Right lobe of liver (tissue), 6 donors: ENCODE measurements at regions of chr3 and their contacts with region 1.

Region 1: DNA sequence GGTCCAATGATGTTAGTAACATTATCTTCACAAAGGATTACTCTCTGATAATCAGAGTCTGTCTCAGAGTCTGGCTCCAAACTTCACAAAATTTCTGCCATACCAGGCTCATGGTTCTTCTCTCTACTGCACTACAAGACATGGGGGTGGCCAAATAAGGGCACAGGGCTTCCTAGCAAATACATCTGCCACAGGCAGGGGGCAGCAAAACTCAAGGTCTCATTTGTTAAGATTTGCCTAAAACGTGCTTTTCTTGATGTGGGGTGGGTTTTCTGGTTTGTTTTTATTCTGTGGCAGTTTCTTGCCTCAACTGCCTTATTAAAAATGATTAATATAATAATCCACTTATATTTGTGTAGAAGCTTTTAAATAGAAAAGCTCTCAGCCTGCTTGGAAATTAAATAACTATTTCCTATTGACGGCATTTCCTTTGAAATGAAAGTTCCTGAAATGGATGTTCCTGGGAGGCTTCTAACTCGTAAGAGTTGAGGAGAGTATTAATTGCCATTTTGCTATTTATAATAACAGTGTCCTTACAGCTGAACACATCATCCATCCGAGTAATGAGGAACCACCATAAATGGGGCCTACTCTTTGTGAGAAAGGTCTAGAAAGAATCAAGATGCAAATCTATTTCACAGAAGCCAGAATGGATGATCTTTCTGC is 53.8 kb downstream of the SST start:
- DNase-seq: peak in 2 of 3 donors; percentile 34 to 65
- ATAC-seq: peak; percentile 87 to 90 (median 90)
- H3K4me3 ChIP-seq: no peak overlapping the region
- H3K27ac ChIP-seq: no peak overlapping the region
- H3K4me1 ChIP-seq: no peaks in the 10 kb centered on the region
- H3K27me3 ChIP-seq: no peaks in the 10 kb centered on the region
- CTCF ChIP-seq: peak; percentile 67 to 86 (median 78)
- POLR2A ChIP-seq: no peak

Region 2: DNA sequence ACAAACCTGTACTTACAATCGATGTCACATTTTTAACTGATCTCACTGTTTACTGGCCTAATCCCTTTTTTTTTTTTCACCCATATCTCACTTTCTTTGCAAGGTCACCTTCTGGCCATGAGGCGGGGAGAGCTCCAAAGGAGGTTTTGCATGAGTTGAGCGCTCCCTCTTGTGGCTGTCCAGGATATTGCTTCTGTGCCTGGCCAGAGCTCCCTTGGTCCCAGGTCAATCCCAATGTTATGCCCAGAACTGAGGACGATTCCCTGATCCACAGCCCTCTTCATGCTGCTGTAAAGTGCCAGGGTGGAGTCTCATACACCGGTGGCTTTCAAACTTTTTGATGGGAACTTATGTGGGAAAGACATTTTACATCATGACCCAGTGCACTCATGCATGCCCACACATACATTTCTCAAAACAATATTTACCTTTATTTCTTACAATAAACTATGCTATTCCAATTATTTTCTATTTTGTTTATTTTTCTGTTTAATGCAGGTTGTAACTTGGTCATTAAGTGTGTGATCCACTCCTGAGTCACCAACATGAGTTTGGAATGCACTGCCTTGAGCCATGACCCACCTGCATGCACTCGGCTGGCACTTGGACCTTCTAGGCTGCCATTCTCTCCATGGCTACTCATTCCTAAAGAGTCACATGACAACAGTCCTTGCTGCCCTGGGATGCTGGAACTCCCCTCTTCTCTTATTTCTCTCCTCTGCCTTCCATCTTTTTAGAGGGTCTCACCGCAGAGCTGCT is 63.4 kb after region 1 on chr3:
- intact Hi-C with region 1: loop called (anchors 5 to 10 kb)
- DNase-seq: peak; percentile 74 to 84 (median 76)
- ATAC-seq: peak; percentile 98 to 99 (median 99)
- H3K4me3 ChIP-seq: no peak overlapping the region
- H3K27ac ChIP-seq: no peak overlapping the region
- H3K4me1 ChIP-seq: peaks cover 0 to 6% (median 0%) of the 10 kb centered on the region in 4 donors
- H3K27me3 ChIP-seq: no peaks in the 10 kb centered on the region
- CTCF ChIP-seq: peak; percentile 88 to 95 (median 92)
- POLR2A ChIP-seq: no peak

Region 3: DNA sequence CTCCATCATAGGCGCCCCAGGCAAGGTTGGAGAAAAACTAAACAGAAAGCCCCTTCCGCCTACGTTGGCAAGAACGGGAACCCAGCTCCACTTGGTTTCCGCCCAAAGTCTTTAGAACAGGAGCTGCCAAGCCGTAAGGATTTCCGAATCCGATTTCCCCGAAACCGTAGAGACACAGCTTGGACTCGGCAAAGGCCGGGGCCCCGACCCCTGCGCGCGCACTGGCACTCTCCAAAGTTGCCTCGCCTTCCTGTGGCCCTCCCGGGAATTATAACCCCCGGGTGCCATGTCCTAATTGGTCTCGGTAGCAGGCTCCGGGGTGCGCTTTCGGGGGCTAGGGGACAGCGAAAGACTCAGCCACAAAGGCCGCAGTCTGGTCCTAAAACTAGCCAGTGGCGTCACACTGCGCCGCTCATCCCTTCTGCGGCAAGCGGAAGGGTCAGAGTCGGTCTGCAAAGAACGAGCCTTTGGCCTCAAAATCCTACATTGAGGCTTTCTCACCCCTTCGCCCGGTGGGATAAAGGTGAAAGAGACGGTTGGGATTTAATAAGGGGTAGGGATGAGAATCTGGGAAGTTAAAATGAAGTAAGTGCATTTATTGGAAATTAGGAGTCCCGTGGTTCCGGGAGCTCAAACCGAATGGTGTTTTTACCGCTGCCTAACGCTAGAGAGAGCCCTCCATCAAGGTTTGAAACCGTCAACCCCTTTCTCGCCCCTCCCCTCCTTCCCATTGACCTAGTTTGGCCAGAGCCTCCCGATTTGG is 122.1 kb after region 1 on chr3:
- intact Hi-C with region 1: no loop called
- DNase-seq: peak; percentile 85 to 93 (median 87)
- ATAC-seq: peak; percentile 39 to 69 (median 50)
- H3K4me3 ChIP-seq: peak overlapping the region; percentile 67 to 73 (median 67)
- H3K27ac ChIP-seq: peak overlapping the region; percentile 99 to 100 (median 99)
- H3K4me1 ChIP-seq: peaks cover 0 to 35% (median 10%) of the 10 kb centered on the region in 4 donors
- H3K27me3 ChIP-seq: no peaks in the 10 kb centered on the region
- CTCF ChIP-seq: peak; percentile 57 to 77 (median 69)
- POLR2A ChIP-seq: peak; percentile 44

Region 4: GRCh38 chr3:187841598-187841959 is 225.1 kb after region 1 on chr3:
- intact Hi-C with region 1: no loop called
- DNase-seq: no peak
- ATAC-seq: no peak
- H3K4me3 ChIP-seq: no peak overlapping the region
- H3K27ac ChIP-seq: no peak overlapping the region
- H3K4me1 ChIP-seq: no peaks in the 10 kb centered on the region
- H3K27me3 ChIP-seq: no peaks in the 10 kb centered on the region
- CTCF ChIP-seq: no peak
- POLR2A ChIP-seq: no peak